Posterior cingulate gyrus (tissue), 11 donors: ENCODE measurements at regions of chr7 and their contacts with region 1.

Region 1: DNA sequence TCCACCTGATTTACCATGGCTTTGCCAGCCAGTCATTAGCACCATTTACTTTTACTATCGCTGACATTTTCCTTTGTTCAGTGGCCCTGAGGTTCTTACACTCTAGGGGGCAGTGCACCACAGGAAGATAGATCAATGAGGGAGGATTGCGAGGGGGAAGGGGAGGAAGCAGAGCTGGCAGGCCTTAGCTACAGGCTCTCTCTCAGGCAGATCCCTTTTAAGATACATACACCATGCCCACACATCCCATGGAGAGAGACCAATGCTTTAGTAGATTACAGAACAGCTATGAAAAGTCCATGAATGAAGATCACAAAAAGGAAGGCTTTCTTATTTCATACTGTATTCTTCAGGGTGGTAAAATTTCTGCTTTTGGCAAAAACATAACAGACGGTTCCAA is 47.4 kb downstream of the DENND11 start:
- DNase-seq: peak in 7 of 10 donors; percentile 46 to 93 (median 66)

Region 2: GRCh38 chr7:140810830-140811556 is 843.6 kb before region 1 on chr7:
- intact Hi-C with region 1: loop called (anchors 5 kb)
- DNase-seq: peak in 4 of 10 donors; percentile 27 to 64 (median 58)

Region 3: GRCh38 chr7:141072548-141073172 is 581.9 kb before region 1 on chr7:
- intact Hi-C with region 1: loop called (anchors 5 kb)
- DNase-seq: peak; percentile 65 to 97 (median 84)

Region 4: GRCh38 chr7:141551094-141551781 is 103.3 kb before region 1 on chr7 and contains the start of gene AGK:
- intact Hi-C with region 1: loop called (anchors 5 kb)
- DNase-seq: peak; percentile 59 to 96 (median 74)

Region 5: DNA sequence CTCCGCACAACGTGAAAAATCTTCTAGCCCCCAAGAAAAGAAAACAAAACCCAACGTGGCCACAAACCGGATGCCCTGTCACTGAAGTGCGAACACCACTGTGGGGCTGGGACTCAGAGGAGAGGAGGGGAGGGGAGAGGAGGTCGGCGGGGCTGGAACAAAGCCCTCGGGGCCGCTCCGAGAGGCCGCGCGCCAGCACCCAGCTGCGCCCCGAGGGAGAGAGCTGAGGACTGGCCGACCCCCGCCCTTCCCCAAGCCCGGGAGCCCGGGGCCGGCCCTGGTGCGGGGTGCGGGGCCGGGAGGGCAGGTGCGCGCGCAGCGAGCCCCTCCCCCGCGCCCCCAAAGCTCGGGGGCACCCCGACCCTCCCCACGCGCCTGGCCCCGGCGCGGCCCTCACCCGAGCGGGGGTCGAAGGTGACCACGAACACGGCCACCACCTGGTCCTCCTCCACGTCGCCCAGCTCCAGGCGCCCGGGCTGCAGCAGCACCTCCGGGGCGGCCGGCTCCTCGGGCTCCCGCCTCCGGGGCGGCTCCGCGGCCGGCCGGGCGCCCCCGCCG is 47.0 kb after region 1 on chr7:
- intact Hi-C with region 1: loop called (anchors 5 kb)
- DNase-seq: peak in 6 of 10 donors; percentile 19 to 88 (median 64)

Region 6: DNA sequence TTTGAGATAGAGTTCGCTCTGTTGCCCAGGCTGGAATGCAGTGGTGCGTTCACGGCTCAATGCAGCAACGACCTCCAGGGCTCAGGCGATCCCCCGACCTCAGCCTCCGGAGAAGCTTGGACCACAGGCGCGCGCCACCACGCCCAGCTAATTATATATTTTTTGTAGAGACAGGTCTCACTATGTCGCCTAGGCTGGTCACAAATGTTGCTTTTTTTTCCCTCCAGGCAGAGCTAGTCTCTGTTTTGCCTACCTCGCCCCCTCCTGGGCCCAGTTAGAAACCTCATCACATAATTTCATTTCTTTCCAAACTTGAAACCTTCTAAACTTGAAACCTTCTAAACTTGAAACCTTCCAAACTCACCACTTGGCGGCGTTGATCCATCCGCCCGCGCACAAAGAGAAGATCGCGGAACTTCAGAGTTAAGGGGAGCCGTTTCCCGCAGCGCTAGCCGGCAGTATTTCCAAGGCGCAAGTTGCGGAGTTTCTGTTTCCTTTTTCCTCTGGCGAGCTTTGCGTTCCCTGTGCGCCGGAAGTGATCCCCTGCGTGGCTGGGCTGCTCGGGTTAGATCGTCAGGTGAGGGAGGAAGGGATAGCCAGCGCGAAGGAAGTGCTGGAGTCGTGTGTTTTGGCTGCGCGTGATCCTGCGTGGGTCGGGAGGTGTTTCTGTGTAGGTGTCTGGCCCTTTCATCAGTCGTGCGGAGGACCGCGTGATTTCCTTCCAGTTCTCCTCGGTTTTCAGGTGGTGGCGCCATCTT is 83.5 kb after region 1 on chr7 and contains the start of gene SSBP1:
- intact Hi-C with region 1: loop called (anchors 2 kb)
- DNase-seq: peak; percentile 85 to 98 (median 90)

Region 7: GRCh38 chr7:141785706-141786552 is 131.4 kb after region 1 on chr7:
- intact Hi-C with region 1: loop called (anchors 2 kb)
- DNase-seq: peak in 3 of 10 donors; percentile 10 to 29 (median 13)